Activated CD4-positive, alpha-beta T cell treated with anti-CD3 and anti-CD28 coated beads for 36 hours (primary cell): ENCODE measurements at regions of chr17 and their contacts with region 1.

Region 1: DNA sequence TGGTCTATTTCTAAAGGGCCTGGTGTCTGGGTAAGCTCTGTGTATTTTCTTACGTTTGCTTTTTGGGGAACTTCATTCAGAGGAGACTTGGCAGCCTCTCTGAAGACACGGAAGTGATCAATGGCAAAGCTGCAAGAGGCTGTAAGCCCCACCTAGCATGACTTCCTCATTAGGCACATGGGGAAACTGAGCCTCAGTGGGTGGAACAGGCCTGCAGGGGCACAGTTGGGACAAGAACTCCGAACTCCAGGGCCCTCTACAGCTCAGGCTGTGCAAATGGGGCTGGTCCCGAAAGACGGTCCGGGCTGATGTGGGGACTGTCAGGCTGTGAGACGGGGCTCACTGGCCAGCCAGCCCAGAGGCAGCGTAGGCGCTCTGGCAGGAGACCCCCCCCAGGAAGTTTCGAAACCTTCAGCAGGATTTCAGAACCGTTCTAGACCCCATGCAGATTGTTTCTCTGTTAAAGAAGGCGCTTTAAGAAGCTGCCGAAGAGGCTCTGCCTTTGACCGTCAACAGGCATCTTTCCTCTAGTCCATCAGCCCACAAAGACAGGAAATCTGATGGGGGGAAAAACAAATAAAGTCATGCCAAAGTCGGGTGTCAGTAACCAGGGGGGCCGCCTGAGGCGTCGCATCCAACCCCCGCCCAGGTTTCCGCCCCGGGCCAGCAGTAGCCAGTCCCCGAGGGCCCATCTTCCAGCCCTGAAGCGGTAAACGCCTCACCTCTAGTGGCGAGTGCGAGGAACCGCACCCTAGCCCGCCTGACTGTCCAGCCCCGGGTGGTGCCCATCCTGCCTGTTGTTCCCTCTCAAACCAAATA is 79.8 kb upstream of the TBC1D3K start:
- DNase-seq: peak; percentile 82
- ATAC-seq: peak; percentile 83
- H3K4me3 Mint-ChIP-seq: no peak overlapping the region
- H3K27ac Mint-ChIP-seq: no peak overlapping the region
- H3K4me1 Mint-ChIP-seq: peaks cover 18% of the 10 kb centered on the region
- H3K27me3 Mint-ChIP-seq: peaks cover 10% of the 10 kb centered on the region

Region 2: DNA sequence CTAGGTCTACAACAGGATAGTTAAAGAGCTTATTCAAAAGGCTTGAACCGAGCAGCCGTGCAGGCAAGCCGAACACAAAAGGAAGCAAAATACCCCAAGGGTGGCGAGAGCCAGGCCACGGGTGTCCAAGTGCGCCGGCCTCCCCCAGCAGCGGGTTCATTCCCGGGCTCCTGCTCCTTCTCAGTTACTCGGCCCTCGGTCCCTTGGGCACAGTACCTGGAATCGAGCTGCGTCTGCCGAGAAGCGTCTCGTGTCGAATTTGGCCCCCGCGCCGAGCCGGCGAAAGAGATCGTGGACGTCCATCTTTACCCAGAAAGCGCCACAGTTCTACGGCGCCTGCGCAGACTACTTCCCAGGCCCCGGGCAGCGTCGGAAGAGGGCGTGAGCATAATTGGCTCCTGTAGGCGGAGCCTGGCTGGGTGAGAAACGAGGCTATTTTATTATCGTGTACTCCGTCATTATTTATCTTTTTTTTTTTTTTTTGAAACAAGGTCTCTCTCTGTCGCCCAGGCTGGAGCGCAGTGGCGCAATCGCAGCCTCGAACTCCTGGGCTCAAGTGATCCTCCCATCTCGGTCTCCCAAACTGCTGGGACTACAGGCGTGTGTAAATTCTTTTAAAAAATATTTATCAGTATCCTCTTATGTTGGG is 201.1 kb before region 1 on chr17 and contains the start of gene DDX52:
- CTCF ChIA-PET with region 1: interaction called, 4 read pairs
- POLR2A ChIA-PET with region 1: no interaction called
- intact Hi-C with region 1: loop called in 1 of 2 experiments (anchors 1 kb)
- DNase-seq: peak; percentile 93
- ATAC-seq: peak; percentile 99
- H3K4me3 Mint-ChIP-seq: peak within 1 kb of the TSS; percentile 94
- H3K27ac Mint-ChIP-seq: peak within 1 kb of the TSS; percentile 91
- H3K4me1 Mint-ChIP-seq: peaks cover 25% of the 10 kb centered on the region
- H3K27me3 Mint-ChIP-seq: peaks cover 24% of the 10 kb centered on the region
- total RNA-seq, gene DDX52: 34.6 to 41.7 TPM